ENCODE measurements at regions of chr20 and their contacts with region 1.

Region 1: DNA sequence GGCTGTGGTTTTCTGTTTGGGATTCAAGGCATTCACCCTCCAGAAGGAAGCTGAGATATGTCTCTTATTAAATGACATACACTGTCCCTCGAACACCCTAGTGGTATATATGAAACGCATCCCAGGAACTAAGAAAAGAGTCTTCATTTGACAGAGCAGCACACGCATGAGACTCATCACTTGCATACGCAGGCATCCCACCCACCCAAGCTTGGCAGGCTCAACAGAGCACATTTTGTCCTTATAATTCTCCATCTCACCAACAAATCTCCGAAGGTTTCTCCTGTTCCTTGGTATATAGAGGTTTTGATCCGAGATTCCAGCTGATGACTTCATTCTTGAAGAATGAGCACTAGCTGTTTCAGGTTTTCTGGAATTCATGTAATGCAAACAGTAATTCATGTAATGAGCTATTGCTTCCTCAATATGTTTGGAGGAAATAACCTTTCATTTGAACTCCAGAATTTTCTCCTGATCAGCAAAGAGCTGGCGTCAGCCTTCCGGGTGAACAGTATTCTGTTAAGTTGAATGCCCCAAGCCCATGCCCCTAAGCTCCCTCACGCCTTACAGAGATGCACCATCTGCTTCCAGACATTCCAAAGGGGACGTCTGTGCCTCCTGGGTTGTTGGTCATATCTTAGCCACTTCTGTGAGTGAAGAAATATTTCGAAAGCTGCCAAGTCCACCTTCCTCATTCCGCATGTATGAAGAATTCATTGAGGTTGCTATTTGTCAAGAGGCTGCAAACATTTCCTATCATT is 66.0 kb upstream of the CDH4 start:
- DNase-seq: peak; percentile 82
- H3K4me3 Mint-ChIP-seq: peak overlapping the region; percentile 60
- H3K27ac Mint-ChIP-seq: peak overlapping the region; percentile 79
- H3K4me1 Mint-ChIP-seq: peaks cover 27% of the 10 kb centered on the region
- H3K27me3 Mint-ChIP-seq: no peaks in the 10 kb centered on the region
- CTCF ChIP-seq: no peak

Region 2: DNA sequence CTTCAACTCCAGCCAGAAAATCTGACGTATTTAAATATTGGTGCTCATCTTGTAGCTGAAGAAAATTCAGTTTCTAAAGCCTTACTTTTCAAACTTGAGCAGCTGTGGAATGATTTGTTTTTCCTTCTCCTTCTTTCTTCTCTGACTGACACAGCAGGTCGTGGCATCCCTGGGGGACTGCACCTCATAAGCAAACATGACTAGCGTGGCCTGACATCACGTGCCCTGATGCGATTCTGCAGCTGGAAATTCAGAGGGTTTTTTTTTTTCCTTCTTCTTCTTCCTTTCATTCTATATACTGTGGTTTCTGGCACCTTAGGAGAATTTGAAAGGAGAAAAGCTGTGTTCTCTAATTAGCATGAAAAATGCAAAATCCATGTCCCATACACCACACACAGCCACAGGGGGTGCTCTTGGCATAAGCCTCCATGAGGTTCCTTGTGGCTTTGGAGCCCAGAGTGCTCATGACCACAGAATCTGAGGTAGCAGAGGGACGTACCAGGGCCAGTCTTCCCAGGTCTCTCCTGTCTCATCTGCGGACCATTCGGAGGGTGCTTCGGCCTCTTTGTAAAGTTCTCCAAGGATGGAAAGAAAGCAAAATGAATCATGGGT is 192.5 kb before region 1 on chr20:
- CTCF ChIA-PET with region 1: no interaction called
- POLR2A ChIA-PET with region 1: no interaction called
- intact Hi-C with region 1: loop called (anchors 10 kb)
- DNase-seq: peak; percentile 18
- H3K4me3 Mint-ChIP-seq: no peak overlapping the region
- H3K27ac Mint-ChIP-seq: no peak overlapping the region
- H3K4me1 Mint-ChIP-seq: no peaks in the 10 kb centered on the region
- H3K27me3 Mint-ChIP-seq: peaks cover 99% of the 10 kb centered on the region
- CTCF ChIP-seq: peak; percentile 28

Region 3: DNA sequence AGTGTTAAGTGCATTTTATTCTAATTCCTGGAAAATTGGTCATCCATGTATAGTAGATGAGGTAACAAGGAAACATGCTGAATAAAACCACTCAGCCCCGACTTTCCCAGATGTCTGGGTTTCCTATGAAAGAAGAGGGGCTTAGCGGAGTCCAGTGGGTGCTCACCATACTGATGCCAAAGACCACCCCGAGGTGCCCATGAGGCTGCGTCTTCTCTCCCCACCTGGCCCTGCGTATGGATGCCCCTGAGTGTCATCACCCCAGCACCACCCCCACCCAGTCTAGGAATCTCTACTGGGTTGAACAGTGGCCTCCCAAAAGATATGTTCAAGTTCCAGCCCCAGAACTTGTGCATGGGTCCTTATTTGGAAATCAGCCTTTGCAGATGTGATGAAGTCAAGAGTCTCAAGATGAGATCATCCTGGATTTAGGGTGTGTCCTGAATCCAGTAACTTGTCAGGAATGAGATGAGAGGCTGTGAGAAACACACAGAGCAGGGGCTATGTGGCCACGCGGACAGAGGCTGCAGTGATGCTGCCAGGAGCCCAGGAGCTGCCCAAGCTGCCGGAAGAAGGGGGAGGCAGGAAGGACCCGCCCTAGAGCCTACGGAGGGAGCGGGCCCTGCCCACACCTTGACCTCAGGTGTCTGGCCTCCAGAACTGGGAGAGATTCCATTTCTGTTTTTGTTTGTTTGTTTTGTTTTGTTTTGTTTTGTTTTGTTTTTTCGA is 58.5 kb before region 1 on chr20:
- CTCF ChIA-PET with region 1: no interaction called
- POLR2A ChIA-PET with region 1: no interaction called
- intact Hi-C with region 1: loop called (anchors 1 kb)
- DNase-seq: peak; percentile 39
- H3K4me3 Mint-ChIP-seq: no peak overlapping the region
- H3K27ac Mint-ChIP-seq: peak overlapping the region; percentile 46
- H3K4me1 Mint-ChIP-seq: no peaks in the 10 kb centered on the region
- H3K27me3 Mint-ChIP-seq: peaks cover 28% of the 10 kb centered on the region
- CTCF ChIP-seq: no peak

Region 4: DNA sequence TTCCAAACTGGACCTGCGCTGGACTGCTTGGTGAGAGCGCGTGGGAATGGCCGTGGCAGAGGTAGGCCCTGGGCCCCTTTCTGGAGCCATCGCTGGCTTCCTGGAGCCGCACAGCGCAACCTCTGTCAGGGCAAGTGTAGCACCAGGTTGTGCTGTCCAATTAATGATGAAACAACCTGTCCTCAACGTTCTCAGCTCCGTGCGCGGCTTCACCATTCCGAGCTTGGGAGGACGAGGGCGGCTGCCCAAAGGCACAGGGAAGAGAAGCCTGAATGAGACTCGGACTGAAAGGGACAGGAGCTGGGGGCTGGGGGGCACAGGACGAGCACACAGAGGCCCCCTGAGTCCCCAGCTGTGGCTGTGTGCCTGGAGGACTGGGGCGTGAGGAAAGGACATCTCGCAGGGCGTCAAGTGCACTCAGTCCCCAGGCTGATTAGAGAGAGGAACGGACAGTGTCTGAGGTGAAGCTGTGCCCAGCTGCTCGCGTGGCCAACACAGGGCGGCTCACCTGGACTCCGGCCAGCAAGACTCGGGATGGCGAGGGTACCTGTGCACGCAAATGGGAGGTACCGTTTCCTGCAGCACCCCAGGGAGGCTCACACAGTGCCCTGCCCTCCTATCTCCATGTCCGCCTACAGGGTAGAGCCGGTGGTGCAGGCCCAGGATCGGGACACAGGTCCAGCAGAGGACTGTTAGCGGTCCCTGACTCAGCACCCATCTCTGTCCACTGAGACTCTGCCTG is 476.4 kb after region 1 on chr20:
- CTCF ChIA-PET with region 1: no interaction called
- POLR2A ChIA-PET with region 1: no interaction called
- intact Hi-C with region 1: loop called (anchors 5 kb)
- DNase-seq: no peak
- H3K4me3 Mint-ChIP-seq: no peak overlapping the region
- H3K27ac Mint-ChIP-seq: no peak overlapping the region
- H3K4me1 Mint-ChIP-seq: no peaks in the 10 kb centered on the region
- H3K27me3 Mint-ChIP-seq: no peaks in the 10 kb centered on the region
- CTCF ChIP-seq: peak; percentile 8